ENCODE measurements at regions of chr9 and their contacts with region 1.

Region 1: GRCh38 chr9:68704814-68705530 is at the start of gene PIP5K1B:
- DNase-seq: peak; percentile 78
- ATAC-seq: peak; percentile 97
- H3K4me3 Mint-ChIP-seq: peak within 1 kb of the TSS; percentile 76
- H3K27ac Mint-ChIP-seq: no peak within 1 kb of the TSS
- H3K4me1 Mint-ChIP-seq: peaks cover 18% of the 10 kb centered on the region
- H3K27me3 Mint-ChIP-seq: peaks cover 64% of the 10 kb centered on the region
- total RNA-seq, gene PIP5K1B: 1.6 TPM

Region 2: GRCh38 chr9:69027355-69028096 is 322.6 kb after region 1 on chr9:
- CTCF ChIA-PET with region 1: interaction called, 3 read pairs
- POLR2A ChIA-PET with region 1: no interaction called
- intact Hi-C with region 1: loop called in 1 of 2 experiments (anchors 10 kb)
- DNase-seq: peak; percentile 57
- ATAC-seq: peak; percentile 86
- H3K4me3 Mint-ChIP-seq: no peak overlapping the region
- H3K27ac Mint-ChIP-seq: no peak overlapping the region
- H3K4me1 Mint-ChIP-seq: peaks cover 35% of the 10 kb centered on the region
- H3K27me3 Mint-ChIP-seq: no peaks in the 10 kb centered on the region

Region 3: DNA sequence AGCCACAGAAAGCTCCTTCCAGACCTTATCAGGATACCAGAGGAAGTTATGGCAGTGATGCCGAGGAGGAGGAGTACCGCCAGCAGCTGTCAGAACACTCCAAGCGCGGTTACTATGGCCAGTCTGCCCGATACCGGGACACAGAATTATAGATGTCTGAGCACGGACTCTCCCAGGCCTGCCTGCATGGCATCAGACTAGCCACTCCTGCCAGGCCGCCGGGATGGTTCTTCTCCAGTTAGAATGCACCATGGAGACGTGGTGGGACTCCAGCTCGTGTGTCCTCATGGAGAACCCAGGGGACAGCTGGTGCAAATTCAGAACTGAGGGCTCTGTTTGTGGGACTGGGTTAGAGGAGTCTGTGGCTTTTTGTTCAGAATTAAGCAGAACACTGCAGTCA is 549.3 kb after region 1 on chr9:
- CTCF ChIA-PET with region 1: no interaction called
- POLR2A ChIA-PET with region 1: no interaction called
- intact Hi-C with region 1: no loop called
- DNase-seq: no peak
- ATAC-seq: no peak
- H3K4me3 Mint-ChIP-seq: no peak overlapping the region
- H3K27ac Mint-ChIP-seq: no peak overlapping the region
- H3K4me1 Mint-ChIP-seq: no peaks in the 10 kb centered on the region
- H3K27me3 Mint-ChIP-seq: no peaks in the 10 kb centered on the region

Region 4: GRCh38 chr9:69279084-69279729 is 574.2 kb after region 1 on chr9:
- CTCF ChIA-PET with region 1: no interaction called
- POLR2A ChIA-PET with region 1: no interaction called
- intact Hi-C with region 1: no loop called
- DNase-seq: peak; percentile 69
- ATAC-seq: peak; percentile 96
- H3K4me3 Mint-ChIP-seq: no peak overlapping the region
- H3K27ac Mint-ChIP-seq: peak overlapping the region; percentile 24
- H3K4me1 Mint-ChIP-seq: peaks cover 9% of the 10 kb centered on the region
- H3K27me3 Mint-ChIP-seq: peaks cover 41% of the 10 kb centered on the region

Measured in activated CD4-positive, alpha-beta T cell treated with anti-CD3 and anti-CD28 coated beads for 36 hours (primary cell).